Pancreas (tissue), 10 donors: ENCODE measurements at regions of chr16 and their contacts with region 1.

Region 1: DNA sequence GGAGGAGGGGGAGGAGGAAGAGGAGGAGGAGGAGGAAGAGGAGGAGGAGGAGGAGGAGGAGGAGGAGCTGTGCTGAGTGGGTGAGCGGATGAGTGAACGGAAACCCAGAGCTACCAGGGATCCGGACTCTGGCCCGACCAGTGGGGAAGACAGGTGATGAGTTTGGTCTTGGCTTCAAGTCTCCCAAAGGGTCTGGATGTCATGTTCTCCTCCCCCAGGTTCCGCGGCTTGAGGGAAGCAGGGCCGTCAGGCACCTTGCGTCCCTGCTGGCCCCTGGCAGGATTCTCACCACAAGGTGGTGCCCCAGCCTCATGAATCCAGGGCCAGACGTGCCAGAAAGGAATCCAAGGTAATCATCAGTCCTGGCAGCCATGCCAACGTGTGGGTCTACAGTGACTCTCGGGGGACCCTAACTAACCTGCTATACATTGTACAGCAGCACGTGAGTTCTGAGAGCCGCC is 13.5 kb upstream of the ABAT start:
- DNase-seq: peak; percentile 52 to 90 (median 80)
- ATAC-seq: peak; percentile 88 to 99 (median 98)
- H3K4me3 ChIP-seq: no peak overlapping the region
- H3K27ac ChIP-seq: no peak overlapping the region
- H3K4me1 ChIP-seq: no peaks in the 10 kb centered on the region
- H3K27me3 ChIP-seq: no peaks in the 10 kb centered on the region
- CTCF ChIP-seq: peak; percentile 48 to 64 (median 56)

Region 2: GRCh38 chr16:8697965-8698364 is 37.1 kb after region 1 on chr16:
- intact Hi-C with region 1: no loop called
- DNase-seq: no peak
- ATAC-seq: no peak
- H3K4me3 ChIP-seq: no peak overlapping the region
- H3K27ac ChIP-seq: no peak overlapping the region
- H3K4me1 ChIP-seq: no peaks in the 10 kb centered on the region
- H3K27me3 ChIP-seq: no peaks in the 10 kb centered on the region
- CTCF ChIP-seq: no peak

Region 3: DNA sequence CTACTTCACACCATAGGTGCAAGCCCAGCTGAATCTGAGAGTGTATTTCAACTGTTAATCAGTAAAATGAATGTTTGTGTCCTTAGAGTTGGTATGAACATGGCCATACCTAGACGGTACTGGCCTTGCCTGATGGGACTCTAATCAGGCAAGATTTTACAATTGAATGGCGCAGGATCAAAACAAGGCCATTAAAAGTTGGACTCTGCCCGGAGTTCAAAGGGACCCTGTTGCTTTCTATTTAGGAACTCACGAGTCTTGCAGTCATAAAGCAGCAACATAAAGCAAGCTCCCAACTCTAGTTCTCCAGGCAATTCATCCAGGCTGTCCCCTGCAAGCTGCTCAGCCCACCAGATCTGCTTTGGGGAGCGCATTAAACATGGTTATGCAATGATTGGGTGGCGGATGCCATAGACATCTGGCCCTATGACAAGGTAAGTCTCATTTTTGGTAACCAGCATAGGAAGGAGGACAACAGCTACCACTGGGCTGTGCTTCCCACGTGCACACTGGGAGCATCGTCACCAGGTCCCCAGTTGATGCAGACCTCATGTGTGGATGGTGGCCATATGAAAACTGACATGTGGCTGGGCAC is 127.8 kb after region 1 on chr16:
- intact Hi-C with region 1: loop called (anchors 5 to 10 kb)
- DNase-seq: no peak
- ATAC-seq: no peak
- H3K4me3 ChIP-seq: no peak overlapping the region
- H3K27ac ChIP-seq: no peak overlapping the region
- H3K4me1 ChIP-seq: no peaks in the 10 kb centered on the region
- H3K27me3 ChIP-seq: no peaks in the 10 kb centered on the region
- CTCF ChIP-seq: no peak

Region 4: DNA sequence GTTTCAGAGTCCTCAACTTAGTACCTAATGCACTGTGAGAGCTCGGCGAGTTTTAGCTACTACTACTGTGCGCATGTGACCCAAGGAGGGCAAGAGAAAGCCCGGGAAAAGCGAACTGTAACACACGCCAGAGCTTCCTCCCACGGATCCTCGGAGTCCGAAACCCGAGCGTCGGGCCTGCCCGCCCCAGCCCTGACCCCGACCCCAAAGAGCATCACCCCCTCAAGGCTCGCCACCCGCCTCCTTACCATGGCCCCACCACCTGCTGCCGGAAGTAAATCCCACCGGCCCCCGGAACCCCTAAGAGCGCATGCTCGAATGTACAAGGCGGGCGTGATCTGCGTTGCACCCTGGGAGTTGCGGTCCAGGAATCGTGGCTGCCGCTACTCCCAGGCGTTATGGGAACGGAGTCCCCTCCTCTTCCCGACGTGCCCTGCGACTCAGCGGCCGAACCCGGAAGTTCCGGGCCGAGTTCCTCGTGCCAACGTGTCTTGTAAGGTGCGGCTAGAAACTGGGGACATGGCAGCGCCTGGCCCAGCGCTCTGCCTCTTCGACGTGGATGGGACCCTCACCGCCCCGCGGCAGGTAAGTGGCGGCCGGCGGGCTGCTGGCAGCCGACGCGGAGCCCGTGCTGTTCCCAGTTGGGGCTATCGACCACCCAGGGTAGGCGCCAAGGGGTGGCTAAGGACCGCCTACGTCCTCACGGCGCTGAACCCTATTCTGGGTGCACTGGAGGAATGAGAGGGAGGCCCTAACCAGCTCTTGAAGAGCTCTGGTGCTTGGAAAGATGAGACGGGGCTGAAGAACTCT is 136.7 kb after region 1 on chr16 and contains the starts of genes PMM2 and TMEM186:
- intact Hi-C with region 1: loop called in 2 of 3 experiments (anchors 5 kb)
- DNase-seq: peak; percentile 93 to 98 (median 96)
- ATAC-seq: peak; percentile 95 to 98 (median 98)
- H3K4me3 ChIP-seq: peak within 1 kb of the TSS; percentile 91 to 99 (median 96)
- H3K27ac ChIP-seq: peak within 1 kb of the TSS; percentile 73 to 85 (median 80)
- H3K4me1 ChIP-seq: peaks cover 18 to 38% (median 21%) of the 10 kb centered on the region in 3 donors
- H3K27me3 ChIP-seq: no peaks in the 10 kb centered on the region
- CTCF ChIP-seq: no peak
- total RNA-seq, gene PMM2: 19.2 to 40.3 (median 29.4) TPM
- total RNA-seq, gene TMEM186: 2.7 to 6.1 (median 4.4) TPM

Region 5: GRCh38 chr16:8878521-8878911 is 217.6 kb after region 1 on chr16:
- intact Hi-C with region 1: loop called in 2 of 3 experiments (anchors 5 kb)
- DNase-seq: peak in 1 of 6 donors; percentile 26
- ATAC-seq: peak in 3 of 4 donors; percentile 7 to 54 (median 43)
- H3K4me3 ChIP-seq: no peak overlapping the region
- H3K27ac ChIP-seq: peak overlapping the region in 2 of 4 donors; percentile 35 to 46
- H3K4me1 ChIP-seq: peaks cover 0 to 5% (median 0%) of the 10 kb centered on the region in 3 donors
- H3K27me3 ChIP-seq: no peaks in the 10 kb centered on the region
- CTCF ChIP-seq: no peak